ENCODE measurements at regions of chrX and their contacts with region 1.

Region 1: GRCh38 chrX:71254092-71254941 is at the start of gene ZMYM3:
- DNase-seq: peak; percentile 86 to 92 (median 89)
- H3K4me3 ChIP-seq: peak within 1 kb of the TSS; percentile 33 to 60 (median 46)
- H3K27ac ChIP-seq: peak within 1 kb of the TSS; percentile 72 to 92 (median 86)
- H3K4me1 ChIP-seq: peaks cover 0 to 7% of the 10 kb centered on the region in 2 donors
- H3K27me3 ChIP-seq: peaks cover 14% of the 10 kb centered on the region
- CTCF ChIP-seq: no peak
- POLR2A ChIP-seq: peak; percentile 39 to 72
- total RNA-seq, gene ZMYM3: 31.3 to 77.3 (median 46.5) TPM

Region 2: DNA sequence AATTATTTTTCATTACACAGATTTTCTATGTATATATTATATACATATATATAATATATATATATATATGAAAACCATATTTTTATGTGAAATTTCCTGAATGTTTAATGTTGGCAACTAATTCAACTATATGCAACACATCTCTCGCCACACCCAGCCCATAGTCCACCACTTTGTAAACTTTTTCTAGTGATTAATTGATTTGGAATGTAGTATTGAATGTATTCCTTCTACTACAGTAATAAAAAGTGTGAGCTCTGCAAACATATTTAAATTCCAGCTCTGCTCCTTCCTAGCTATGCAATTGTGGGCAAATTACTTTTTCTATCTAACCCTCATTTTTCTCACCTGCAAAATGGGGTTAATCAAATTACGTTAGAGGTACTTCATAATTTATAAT is 533.6 kb before region 1 on chrX:
- intact Hi-C with region 1: no loop called
- DNase-seq: no peak
- H3K4me3 ChIP-seq: no peak overlapping the region
- H3K27ac ChIP-seq: no peak overlapping the region
- H3K4me1 ChIP-seq: no peaks in the 10 kb centered on the region
- H3K27me3 ChIP-seq: peaks cover 12% of the 10 kb centered on the region
- CTCF ChIP-seq: no peak
- POLR2A ChIP-seq: no peak

Region 3: GRCh38 chrX:71285929-71286328 is 31.6 kb after region 1 on chrX:
- intact Hi-C with region 1: loop called in 1 of 2 experiments (anchors 5 kb)
- DNase-seq: no peak
- H3K4me3 ChIP-seq: no peak overlapping the region
- H3K27ac ChIP-seq: no peak overlapping the region
- H3K4me1 ChIP-seq: peaks cover 4 to 15% of the 10 kb centered on the region in 2 donors
- H3K27me3 ChIP-seq: no peaks in the 10 kb centered on the region
- CTCF ChIP-seq: no peak
- POLR2A ChIP-seq: no peak

Measured in adrenal gland (tissue), 19 donors.